Posterior cingulate gyrus (tissue), 11 donors: ENCODE measurements at regions of chr16 and their contacts with region 1.

Region 1: GRCh38 chr16:56866943-56867830 is 2.2 kb downstream of the SLC12A3 start:
- DNase-seq: peak in 3 of 10 donors; percentile 25 to 47 (median 35)

Region 2: DNA sequence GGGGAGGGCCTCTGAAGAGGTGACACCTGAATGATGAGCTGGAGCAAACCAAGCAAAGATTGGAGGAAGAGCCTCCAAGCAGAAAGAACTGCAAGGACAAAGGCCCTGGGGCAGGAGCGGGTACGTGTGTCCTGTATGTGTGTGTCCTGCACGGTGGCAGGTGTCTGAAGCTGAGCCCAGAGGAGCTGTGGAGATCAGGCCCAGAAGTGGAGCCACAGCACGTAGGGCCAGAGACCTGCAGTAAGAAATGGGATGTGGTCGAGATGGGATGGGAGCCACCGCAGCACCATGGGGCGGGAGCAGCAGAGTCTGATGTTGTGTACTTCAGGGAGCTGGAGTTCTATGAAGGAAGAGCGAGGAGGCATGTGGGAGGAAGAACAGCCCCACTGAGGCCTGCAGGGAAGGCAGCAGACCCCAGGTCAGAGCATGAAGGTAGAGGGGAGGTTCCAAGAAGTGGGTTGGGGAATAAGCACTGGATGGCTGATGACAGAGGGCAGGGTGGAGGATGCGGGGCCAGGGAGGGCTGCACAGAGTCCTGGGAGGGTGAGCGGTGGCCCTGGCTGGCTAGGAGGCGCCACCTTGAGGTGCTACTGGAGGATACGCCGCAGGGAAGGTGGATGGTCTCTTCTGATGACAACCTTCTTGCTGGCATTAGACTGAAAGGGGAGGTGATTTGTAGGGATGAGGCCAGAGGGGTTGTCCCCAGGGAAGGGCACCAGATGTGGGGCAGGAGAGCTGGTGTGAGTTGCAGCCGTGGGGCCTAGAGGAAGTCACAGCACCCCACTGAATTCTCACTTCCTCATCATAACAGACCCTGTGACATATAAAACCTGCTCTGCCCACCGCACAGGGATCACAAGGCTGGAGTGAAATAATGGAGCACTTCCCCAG is 83.9 kb after region 1 on chr16:
- intact Hi-C with region 1: loop called (anchors 5 kb)
- DNase-seq: peak in 2 of 10 donors; percentile 29 to 75

Region 3: GRCh38 chr16:57045694-57046381 is 178.7 kb after region 1 on chr16:
- intact Hi-C with region 1: loop called (anchors 10 kb)
- DNase-seq: peak; percentile 27 to 94 (median 71)

Region 4: DNA sequence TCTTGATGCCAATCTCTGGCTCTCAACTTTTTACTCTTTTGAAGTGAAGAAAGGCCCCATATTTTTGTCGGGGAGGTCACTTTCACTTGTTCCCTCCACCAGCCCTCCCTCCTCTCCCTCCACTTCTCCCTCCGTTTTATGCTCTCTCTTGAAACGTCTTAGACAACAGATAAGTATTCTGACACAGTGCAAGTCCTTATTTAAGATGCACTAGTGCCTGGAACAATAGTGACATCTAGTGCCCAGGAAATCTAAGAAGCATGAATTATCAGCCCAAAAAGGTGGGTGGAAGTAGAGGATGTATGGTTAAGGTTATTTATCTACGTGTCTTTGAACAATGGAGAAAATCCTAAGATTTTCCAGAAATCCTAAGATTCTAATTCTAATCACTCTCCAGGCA is 300.8 kb after region 1 on chr16:
- intact Hi-C with region 1: loop called (anchors 10 kb)
- DNase-seq: no peak